Activated T-helper 2 cell treated with anti-CD3 and anti-CD28 coated beads, Interferon-gamma antibody, Interleukin-2, Interleukin-4, amounts not matched to agents 10 μg/mL and 5 μg/mL and 100 μg/mL, durations not matched to agents 14 hours and 24 hours and 36 hours (primary cell): ENCODE measurements at regions of chr1 and their contacts with region 1.

Region 1: DNA sequence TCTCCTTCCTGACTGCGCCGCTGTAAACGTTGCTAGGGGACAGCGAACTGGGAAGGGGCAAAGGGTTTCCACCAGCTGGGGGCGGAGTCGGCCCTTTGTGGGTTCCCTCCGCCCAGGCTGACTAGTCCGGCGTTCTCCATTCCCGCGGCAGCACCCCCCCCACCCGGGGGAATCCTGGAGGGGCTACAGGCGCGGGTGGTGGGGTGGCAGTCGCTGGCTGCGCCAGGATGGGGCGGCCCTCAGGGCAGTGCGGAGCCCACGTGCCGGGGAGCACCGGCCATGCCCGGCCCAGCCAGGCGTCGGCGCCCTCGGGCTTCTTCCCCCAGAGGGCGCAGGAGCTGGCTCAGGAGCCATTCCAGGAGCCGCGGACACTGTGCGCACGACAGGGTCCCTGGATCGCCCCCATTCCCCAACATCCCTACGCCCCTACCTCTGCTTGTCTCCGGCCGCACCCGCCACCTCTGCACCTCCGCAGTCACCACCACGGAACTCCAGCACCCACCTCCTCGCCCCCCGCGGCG is 476 bp downstream of the BATF3 start:
- DNase-seq: peak; percentile 52
- H3K4me3 Mint-ChIP-seq: peak overlapping the region; percentile 90
- H3K27ac Mint-ChIP-seq: peak overlapping the region; percentile 84
- H3K4me1 Mint-ChIP-seq: peaks cover 64% of the 10 kb centered on the region
- H3K27me3 Mint-ChIP-seq: no peaks in the 10 kb centered on the region

Region 2: GRCh38 chr1:212260557-212261355 is 438.4 kb before region 1 on chr1:
- intact Hi-C with region 1: no loop called
- DNase-seq: no peak
- H3K4me3 Mint-ChIP-seq: no peak overlapping the region
- H3K27ac Mint-ChIP-seq: no peak overlapping the region
- H3K4me1 Mint-ChIP-seq: peaks cover 38% of the 10 kb centered on the region
- H3K27me3 Mint-ChIP-seq: peaks cover 1% of the 10 kb centered on the region

Region 3: GRCh38 chr1:212608209-212608955 is 90.8 kb before region 1 on chr1 and contains the start of gene ATF3:
- intact Hi-C with region 1: loop called (anchors 5 kb)
- DNase-seq: peak; percentile 88
- H3K4me3 Mint-ChIP-seq: peak within 1 kb of the TSS; percentile 88
- H3K27ac Mint-ChIP-seq: peak within 1 kb of the TSS; percentile 91
- H3K4me1 Mint-ChIP-seq: peaks cover 44% of the 10 kb centered on the region
- H3K27me3 Mint-ChIP-seq: peaks cover 39% of the 10 kb centered on the region
- total RNA-seq, gene ATF3: 17.9 and 23.9 TPM in 2 replicates

Region 4: DNA sequence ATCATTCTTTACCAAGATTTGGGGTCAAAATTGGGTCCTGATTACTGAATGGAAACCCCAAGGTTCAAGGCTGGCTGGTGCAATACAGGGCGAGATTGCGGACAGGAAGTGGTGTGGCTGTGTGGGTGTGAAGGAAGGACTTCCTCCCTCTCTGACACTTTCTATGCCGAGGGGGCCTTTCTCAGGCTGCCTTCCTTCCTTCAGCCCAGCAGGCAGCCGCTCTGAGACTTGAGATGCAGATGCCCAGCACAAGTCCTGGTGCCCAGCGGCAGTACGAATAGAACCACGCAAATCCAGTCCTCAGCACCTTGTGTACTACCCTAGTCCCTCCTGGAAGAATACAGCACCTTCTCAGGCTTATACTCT is 15.8 kb before region 1 on chr1:
- intact Hi-C with region 1: loop called (anchors 1 kb)
- DNase-seq: no peak
- H3K4me3 Mint-ChIP-seq: peak overlapping the region; percentile 41
- H3K27ac Mint-ChIP-seq: peak overlapping the region; percentile 88
- H3K4me1 Mint-ChIP-seq: peaks cover 62% of the 10 kb centered on the region
- H3K27me3 Mint-ChIP-seq: no peaks in the 10 kb centered on the region

Region 5: DNA sequence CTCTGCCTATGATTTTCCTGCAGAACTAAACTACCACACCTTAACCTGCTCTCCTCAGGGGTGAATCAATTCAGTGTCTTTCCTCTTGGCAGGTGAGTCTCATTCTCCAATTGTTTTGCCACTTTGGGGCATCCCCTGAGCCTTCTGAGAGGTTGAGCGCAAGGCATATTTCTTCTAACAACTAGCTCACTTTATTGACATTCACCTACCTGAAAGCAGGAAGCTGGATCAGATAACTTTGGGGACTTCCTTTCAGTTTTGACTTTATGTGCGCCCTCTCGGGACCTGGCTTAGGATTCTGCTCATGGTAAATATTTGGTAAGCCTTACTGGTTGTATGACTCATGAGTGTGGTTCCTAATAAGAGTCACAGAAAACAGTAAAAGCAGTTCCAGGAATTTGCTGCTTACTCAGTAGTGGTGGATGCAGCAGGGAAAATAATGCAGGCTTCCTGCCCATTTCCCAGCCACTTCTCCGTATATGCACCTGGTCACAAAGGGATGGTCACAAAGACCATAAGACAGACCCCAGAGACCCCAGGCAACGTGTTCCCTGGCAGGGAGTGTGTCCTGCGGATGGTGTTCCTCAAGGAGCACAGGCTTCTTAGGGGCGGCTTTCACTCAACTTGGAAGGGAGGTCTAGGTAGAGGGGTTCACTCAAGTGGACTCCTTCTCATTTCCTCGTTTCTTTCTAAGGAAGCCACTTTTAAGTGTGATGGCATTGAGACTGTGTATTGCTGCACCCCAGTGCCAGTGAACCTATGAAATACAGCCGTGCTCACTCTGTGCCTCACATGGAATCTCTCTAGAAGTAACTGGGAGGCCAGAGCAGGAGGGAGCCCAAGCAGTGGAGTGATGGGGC is 22.5 kb after region 1 on chr1:
- intact Hi-C with region 1: loop called (anchors 1 kb)
- DNase-seq: peak; percentile 43
- H3K4me3 Mint-ChIP-seq: peak overlapping the region; percentile 43
- H3K27ac Mint-ChIP-seq: peak overlapping the region; percentile 73
- H3K4me1 Mint-ChIP-seq: peaks cover 52% of the 10 kb centered on the region
- H3K27me3 Mint-ChIP-seq: no peaks in the 10 kb centered on the region

Region 6: DNA sequence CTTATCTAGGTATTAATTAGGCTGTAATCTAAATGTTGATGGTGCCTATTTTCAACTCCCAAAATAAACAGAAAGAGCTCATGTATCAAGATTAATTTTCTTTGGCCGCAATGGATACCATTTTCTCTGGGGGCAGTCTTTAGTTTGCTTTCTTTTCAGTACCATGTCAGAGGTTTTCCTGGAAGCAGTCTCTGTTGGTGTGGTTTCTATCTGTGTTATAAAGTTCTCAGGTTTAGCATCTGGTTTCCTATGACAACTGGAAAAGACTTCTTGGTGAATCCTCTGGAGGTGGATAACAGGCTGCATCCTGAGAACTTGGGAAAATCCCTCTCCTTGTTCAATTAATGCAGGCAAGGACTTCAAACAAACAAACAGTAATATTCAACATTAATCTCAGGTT is 39.2 kb after region 1 on chr1:
- intact Hi-C with region 1: no loop called
- DNase-seq: no peak
- H3K4me3 Mint-ChIP-seq: no peak overlapping the region
- H3K27ac Mint-ChIP-seq: peak overlapping the region; percentile 88
- H3K4me1 Mint-ChIP-seq: peaks cover 40% of the 10 kb centered on the region
- H3K27me3 Mint-ChIP-seq: no peaks in the 10 kb centered on the region

Region 7: GRCh38 chr1:212782422-212783154 is 83.4 kb after region 1 on chr1:
- intact Hi-C with region 1: loop called (anchors 1 kb)
- DNase-seq: no peak
- H3K4me3 Mint-ChIP-seq: no peak overlapping the region
- H3K27ac Mint-ChIP-seq: peak overlapping the region; percentile 33
- H3K4me1 Mint-ChIP-seq: peaks cover 18% of the 10 kb centered on the region
- H3K27me3 Mint-ChIP-seq: no peaks in the 10 kb centered on the region